Dendritic cell treated with granulocyte-macrophage colony-stimulating factor and Interleukin-4, amounts not matched to agents 40 ng/mL and 50 ng/mL, for 4 days (primary cell): ENCODE measurements at regions of chr2 and their contacts with region 1.

Region 1: DNA sequence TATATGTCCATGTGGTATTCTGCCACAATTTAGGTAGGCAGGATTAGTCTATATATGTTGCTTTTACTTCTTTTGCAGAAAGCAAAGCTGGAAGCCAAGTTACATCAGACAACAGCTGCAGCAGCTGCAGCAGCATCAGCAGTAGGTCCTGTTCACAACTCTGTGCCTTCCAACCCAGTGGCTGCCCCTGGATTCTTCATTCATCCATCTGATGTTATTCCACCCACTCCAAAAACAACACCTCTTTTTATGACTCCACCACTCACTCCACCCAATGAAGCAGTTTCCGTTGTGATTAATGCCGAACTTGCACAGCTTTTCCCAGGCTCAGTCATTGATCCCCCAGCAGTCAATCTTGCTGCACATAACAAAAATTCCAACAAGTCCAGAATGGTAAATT is 107.6 kb downstream of the BIRC6 start:
- H3K4me3 Mint-ChIP-seq: no peak overlapping the region
- H3K27ac Mint-ChIP-seq: no peak overlapping the region
- H3K4me1 Mint-ChIP-seq: no peaks in the 10 kb centered on the region
- H3K27me3 Mint-ChIP-seq: no peaks in the 10 kb centered on the region

Region 2: DNA sequence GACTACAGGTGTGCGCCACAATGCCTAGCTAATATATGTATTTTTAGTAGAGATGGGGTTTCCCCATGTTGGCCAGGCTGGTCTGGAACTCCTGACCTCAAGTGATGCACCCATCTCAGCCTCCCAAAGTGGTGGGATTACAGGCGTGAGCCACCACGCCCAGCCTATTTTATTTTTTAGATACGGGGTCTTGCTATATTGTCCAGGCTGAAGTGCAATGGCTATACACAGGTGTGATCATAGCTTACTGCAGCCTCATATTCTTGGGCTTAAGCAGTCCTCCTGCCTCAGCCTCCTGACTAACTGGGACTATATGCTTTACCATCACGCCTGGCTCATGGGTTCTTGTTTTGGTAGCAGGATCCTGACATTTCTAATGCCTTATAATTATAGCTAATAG is 65.2 kb before region 1 on chr2:
- intact Hi-C with region 1: loop called (anchors 10 kb)
- H3K4me3 Mint-ChIP-seq: no peak overlapping the region
- H3K27ac Mint-ChIP-seq: no peak overlapping the region
- H3K4me1 Mint-ChIP-seq: peaks cover 8% of the 10 kb centered on the region
- H3K27me3 Mint-ChIP-seq: no peaks in the 10 kb centered on the region